Activated naive CD4-positive, alpha-beta T cell treated with anti-CD3 and anti-CD28 coated beads, Interleukin-2, amount 10 ng/mL, durations not matched to agents 7 days and 5 days (primary cell): ENCODE measurements at regions of chr18 and their contacts with region 1.

Region 1: GRCh38 chr18:839224-840022 is 27.4 kb upstream of the YES1 start:
- DNase-seq: peak; percentile 91
- H3K4me3 Mint-ChIP-seq: no peak overlapping the region
- H3K27ac Mint-ChIP-seq: no peak overlapping the region
- H3K4me1 Mint-ChIP-seq: peaks cover 6% of the 10 kb centered on the region
- H3K27me3 Mint-ChIP-seq: peaks cover 19% of the 10 kb centered on the region

Region 2: DNA sequence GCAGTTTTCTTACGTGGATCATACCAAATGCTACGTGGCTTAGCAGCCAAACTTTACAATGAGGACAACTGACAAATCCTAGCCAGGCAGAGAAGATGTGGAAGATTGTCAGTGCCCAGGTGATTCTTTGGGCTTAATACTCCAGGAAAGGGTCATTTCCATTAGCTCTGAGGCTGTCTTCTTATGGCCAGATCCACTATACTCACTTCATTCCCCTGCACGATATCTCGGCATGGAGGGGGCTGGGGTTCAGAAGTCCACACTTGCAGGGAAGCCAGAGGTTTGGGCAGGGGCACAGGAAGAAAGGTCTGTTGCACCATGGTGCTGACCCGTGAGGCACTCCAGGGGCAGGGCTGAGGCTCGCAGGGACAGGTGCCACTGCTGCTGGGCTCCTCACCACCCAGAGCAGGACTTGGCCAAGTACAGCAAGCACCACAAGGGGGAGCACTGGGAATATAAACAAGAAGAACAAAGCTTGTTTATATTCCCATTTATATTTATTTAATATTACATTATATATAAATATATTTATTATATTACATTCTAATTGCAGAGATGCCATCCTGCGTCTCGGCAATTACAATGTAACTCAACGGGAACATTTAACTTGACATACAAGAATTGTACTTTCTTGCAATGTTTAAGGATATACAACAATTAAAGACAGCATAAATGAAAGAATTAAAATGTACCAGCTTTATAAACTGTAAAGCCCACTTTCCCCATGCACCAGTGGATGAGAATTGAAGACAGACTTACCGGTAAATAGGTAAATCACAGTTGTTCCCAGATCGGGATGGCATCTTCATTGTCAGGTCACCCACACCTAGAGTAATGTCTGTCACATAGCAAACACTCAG is 215.4 kb before region 1 on chr18:
- CTCF ChIA-PET with region 1: interaction called, 89 read pairs
- DNase-seq: peak; percentile 79
- H3K4me3 Mint-ChIP-seq: no peak overlapping the region
- H3K27ac Mint-ChIP-seq: no peak overlapping the region
- H3K4me1 Mint-ChIP-seq: no peaks in the 10 kb centered on the region
- H3K27me3 Mint-ChIP-seq: peaks cover 36% of the 10 kb centered on the region

Region 3: GRCh38 chr18:712401-713134 is 126.9 kb before region 1 on chr18 and contains the start of gene ENOSF1:
- CTCF ChIA-PET with region 1: interaction called, 32 read pairs
- DNase-seq: peak; percentile 90
- H3K4me3 Mint-ChIP-seq: peak within 1 kb of the TSS; percentile 82
- H3K27ac Mint-ChIP-seq: peak within 1 kb of the TSS; percentile 96
- H3K4me1 Mint-ChIP-seq: peaks cover 44% of the 10 kb centered on the region
- H3K27me3 Mint-ChIP-seq: peaks cover 14% of the 10 kb centered on the region

Region 4: DNA sequence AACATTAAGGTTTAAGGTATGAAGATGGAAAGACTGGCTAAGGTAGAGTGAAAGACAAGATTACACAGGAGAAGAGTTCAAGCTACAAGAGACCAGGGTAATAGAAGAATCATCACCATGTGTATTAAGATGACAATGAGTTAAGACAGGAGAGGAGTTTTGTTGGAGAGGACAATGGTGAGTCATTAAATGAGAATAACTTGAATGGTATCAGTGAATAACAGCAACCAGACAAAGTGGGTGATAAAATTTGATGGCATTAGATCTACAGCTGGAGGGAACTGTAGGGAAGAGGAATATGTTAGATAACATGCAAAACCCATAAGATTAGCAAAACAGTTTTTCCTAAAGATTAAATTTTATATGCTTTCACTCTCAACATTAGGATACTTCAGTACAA is 108.2 kb before region 1 on chr18:
- CTCF ChIA-PET with region 1: interaction called, 180 read pairs
- DNase-seq: no peak
- H3K4me3 Mint-ChIP-seq: no peak overlapping the region
- H3K27ac Mint-ChIP-seq: peak overlapping the region; percentile 4
- H3K4me1 Mint-ChIP-seq: peaks cover 4% of the 10 kb centered on the region
- H3K27me3 Mint-ChIP-seq: no peaks in the 10 kb centered on the region

Region 5: DNA sequence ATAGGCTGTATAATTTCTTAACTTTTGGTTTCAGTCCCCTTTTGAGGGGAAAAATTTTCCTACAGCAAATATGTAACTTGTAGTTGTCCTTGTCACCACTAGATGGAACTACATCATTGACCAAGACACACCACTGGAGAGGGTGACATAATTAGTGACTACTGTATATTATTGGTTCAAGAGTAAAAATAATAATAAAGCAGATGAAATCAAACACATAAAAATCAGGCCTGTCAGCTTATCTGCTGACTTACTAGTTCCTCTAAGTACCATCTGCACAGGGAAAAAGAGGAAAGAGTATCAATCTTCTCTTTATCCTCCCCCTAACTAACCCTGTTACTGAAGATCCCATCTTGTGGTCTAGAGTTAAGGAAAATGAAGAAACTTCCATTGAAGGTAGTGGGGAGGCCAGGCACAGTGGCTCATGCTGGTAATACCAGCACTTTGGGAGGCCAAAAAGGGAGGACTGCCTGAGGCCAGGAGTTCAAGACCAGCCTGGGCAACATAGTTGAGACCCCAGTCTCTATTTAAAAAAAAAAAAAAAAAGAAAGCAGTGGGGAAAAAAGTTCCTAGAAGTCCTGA is 97.4 kb before region 1 on chr18:
- CTCF ChIA-PET with region 1: interaction called, 180 read pairs
- DNase-seq: no peak
- H3K4me3 Mint-ChIP-seq: no peak overlapping the region
- H3K27ac Mint-ChIP-seq: no peak overlapping the region
- H3K4me1 Mint-ChIP-seq: peaks cover 5% of the 10 kb centered on the region
- H3K27me3 Mint-ChIP-seq: no peaks in the 10 kb centered on the region

Region 6: DNA sequence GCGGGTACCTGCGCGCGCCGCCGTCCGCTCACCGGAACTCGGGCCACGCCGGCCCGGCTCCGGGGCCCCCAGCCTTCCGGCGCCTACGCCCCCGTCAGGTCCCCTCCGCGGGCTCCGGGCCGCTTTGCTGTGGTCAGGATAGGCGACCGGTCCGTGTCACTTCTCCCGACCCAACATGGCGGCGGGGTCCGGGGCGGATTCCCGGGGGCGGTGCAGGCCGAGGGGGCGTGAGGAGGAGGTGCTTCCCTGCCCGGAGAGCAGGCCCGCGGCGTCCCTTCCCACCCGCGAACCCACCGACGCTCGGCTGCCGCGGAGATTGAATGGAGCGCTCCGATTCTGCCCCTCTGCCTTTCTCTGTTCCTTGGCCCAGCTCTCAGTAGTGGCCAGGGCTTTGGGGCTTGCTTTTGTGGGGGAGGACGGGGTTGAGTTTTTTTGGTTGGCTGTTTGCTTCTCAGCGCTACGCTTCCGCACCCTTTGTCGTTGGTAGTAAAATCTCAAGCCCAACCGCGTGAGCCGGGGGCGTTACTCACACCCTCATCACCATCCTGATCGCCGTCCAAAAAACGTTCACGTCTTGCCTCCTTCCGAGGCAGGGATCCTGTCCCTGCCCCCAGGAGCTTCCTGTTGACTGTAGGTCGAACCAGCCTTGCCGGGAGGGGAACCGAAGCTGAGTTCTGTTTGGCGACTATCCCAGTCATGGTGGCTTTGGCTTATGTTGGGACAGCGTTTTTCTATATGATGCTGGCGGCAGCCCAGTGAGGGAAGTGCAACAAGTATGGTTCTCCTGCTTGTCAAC is 26.8 kb before region 1 on chr18:
- CTCF ChIA-PET with region 1: no interaction called
- DNase-seq: peak; percentile 85
- H3K4me3 Mint-ChIP-seq: peak overlapping the region; percentile 84
- H3K27ac Mint-ChIP-seq: peak overlapping the region; percentile 99
- H3K4me1 Mint-ChIP-seq: peaks cover 76% of the 10 kb centered on the region
- H3K27me3 Mint-ChIP-seq: peaks cover 8% of the 10 kb centered on the region